ENCODE measurements at regions of chr1 and their contacts with region 1.

Region 1: DNA sequence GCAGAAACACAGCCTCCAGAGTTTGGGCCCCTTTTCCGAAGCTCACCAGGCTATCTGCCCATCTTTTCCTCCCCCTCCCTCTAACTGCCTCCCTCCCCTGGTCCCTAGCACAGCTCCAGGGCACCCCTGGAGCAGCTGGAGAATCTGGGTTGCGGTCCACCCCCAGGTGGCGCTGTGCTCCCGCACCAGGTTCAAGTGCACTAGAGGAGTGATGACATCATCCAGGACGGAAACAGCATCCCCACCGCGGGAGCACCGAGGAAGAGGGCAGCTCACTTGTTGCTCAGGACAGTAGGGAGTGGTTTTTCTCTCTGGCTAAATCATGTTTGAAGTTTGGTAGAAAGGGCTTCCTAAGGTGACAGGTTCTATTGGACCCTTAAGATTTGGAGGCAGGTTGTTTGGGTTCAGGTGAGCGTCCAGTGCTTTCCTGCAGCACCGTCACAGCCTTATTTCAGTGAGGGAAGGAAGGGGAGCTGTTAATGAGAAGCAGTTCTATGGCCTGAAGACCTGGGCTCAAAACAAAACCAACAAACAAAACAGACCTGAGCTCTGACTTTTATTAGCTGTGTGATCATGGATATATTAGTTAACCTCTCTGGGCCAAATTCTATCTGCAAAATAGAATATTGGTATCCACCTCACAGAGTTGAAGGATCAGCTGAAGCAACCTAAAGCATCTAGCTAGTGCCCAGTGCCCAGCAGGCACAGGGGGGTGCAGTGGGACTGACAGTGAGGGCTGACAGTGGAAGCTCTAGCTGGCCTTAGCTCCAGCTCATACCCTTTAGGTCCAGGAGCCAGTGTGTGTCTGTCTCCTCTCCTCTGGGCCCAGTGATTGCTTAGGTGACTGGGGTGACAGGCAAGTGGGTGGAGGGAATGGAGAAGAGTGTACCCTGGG is 7.5 kb downstream of the SHISA4 start:
- DNase-seq: peak; percentile 92
- H3K4me3 ChIP-seq: no peak overlapping the region
- H3K27ac ChIP-seq: peak overlapping the region; percentile 33 to 64
- H3K4me1 ChIP-seq: no peaks in the 10 kb centered on the region
- H3K27me3 ChIP-seq: no peaks in the 10 kb centered on the region
- CTCF ChIP-seq: peak; percentile 91 to 96 (median 95)
- POLR2A ChIP-seq: no peak

Region 2: DNA sequence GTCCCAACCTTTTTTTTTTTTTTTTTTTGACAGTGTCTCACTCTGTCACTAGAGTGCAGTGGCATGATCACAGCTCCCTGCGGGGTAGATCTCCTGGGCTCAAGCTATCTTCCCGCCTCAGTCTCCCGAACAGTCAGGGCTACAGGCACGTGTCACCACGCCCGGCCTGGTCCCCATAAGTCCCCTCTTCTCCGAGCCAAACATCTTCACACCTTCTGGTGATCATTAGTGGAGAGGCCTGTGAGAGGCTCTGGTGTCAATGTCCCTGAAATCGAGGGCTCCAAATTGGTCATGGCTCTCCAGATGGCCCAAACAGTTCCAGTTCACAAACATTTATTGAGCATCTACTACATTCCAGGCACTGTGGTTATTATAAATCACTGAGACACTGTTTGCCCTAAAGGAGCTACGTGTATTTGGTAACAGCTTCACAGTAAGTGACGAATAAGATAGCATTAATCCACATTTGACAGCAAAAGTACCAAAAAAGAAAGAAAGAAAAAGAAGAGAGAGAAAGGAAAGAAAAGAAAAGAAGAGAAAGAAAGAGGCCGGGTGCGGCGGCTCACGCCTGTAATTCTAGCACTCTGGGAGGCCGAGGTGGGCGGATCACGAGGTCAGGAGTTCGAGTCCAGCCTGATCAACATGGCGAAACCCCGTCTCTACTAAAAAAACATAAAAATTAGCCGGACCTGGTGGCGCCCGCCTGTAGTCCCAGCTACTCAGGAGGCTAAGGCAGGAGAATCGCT is 58.3 kb after region 1 on chr1:
- intact Hi-C with region 1: loop called (anchors 5 kb)
- DNase-seq: no peak
- H3K4me3 ChIP-seq: peak overlapping the region; percentile 60 to 84
- H3K27ac ChIP-seq: peak overlapping the region; percentile 82 to 90
- H3K4me1 ChIP-seq: peaks cover 13% of the 10 kb centered on the region
- H3K27me3 ChIP-seq: no peaks in the 10 kb centered on the region
- CTCF ChIP-seq: no peak
- POLR2A ChIP-seq: no peak